ENCODE measurements at regions of chr22 and their contacts with region 1.

Region 1: GRCh38 chr22:29553351-29554224 is at the start of gene THOC5:
- DNase-seq: peak; percentile 96
- ATAC-seq: peak; percentile 100
- total RNA-seq, gene THOC5: 46.5 TPM

Region 2: GRCh38 chr22:29603358-29604075 is 49.9 kb after region 1 on chr22 and contains the start of gene NF2:
- intact Hi-C with region 1: loop called (anchors 5 kb)
- DNase-seq: peak; percentile 99
- ATAC-seq: peak; percentile 99
- total RNA-seq, gene NF2: 49.0 TPM

Region 3: DNA sequence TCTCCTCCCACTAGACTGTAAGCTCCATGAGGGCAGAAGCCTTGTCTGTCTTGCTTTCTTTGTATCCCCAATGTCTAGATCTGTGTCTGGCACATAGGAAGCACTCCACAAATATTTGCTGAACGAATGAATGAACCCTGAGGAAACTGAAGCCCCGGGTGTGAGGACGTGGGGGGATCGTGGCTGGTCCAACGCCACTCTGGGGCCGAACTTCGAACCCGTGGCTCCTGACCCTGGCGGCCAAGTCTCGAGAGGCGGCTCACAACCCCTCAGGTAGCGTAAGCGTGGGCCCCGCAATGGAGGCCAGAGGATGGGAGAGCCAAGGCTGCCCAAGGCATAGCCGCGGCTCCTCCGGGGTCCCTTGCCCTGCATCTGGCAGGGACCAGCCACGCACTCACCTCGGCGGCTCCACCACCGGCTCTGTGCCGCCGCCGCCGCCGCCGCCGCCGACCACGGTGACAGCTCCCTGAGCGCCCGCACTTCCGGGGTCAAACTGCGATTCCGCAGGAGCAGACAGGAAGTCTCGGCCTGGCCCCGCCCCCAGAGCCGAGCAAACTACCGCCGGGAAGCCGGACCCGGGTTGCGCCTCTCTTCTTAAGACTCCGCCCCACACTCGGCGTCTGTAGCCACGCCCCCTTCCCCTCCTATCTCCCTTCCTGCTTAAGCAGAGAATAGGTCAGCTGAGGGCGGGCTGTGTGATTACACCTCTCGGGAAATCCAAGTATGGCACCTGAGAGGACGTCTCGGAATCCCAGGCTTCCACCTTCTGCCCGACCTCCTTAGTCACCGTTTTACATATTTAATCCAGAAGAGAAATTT is 284.4 kb after region 1 on chr22 and contains the start of gene ASCC2:
- intact Hi-C with region 1: no loop called
- DNase-seq: peak; percentile 100
- ATAC-seq: peak; percentile 100
- total RNA-seq, gene ASCC2: 33.8 TPM